Activated naive CD4-positive, alpha-beta T cell treated with anti-CD3 and anti-CD28 coated beads for 36 hours (primary cell): ENCODE measurements at regions of chr1 and their contacts with region 1.

Region 1: DNA sequence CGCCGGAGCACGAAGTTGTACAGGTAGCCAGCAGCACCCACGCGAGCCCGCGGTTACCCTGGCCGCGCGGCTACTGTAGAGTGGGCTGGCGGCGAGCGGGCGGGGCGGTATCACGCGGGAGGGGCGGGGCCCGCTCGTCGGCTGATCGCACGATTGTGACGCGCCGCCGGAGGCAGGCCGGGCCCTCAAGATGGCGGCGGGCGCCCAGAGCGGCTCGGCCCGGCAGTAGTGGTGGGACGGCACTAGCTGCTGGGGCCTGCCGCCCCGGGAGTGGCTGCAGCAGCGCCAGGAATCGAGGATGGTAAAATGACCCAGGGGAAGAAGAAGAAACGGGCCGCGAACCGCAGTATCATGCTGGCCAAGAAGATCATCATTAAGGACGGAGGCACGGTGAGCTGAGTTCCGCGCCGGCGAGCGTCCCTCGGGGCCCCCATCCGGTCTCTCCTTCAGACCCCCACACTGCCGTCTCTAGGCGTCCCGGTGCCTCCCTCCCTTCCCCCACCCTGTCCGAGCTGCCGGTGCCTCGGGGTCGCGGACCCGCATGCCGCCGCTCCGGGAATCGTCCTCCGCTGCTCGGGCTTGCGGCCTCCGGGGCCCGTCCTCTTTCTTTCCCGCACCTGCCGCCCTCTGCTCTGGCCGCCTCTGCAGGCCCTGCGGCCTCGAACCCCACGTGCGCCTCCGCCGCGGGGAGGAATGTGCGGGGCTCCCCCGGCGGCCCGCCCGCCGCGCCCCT is 68.3 kb downstream of the SLC35A3 start:
- DNase-seq: peak; percentile 89
- H3K4me3 Mint-ChIP-seq: peak overlapping the region; percentile 95
- H3K27ac Mint-ChIP-seq: peak overlapping the region; percentile 99
- H3K4me1 Mint-ChIP-seq: peaks cover 54% of the 10 kb centered on the region
- H3K27me3 Mint-ChIP-seq: no peaks in the 10 kb centered on the region

Region 2: GRCh38 chr1:98870959-98871903 is 1166.9 kb before region 1 on chr1:
- CTCF ChIA-PET with region 1: no interaction called
- intact Hi-C with region 1: loop called (anchors 2 kb)
- DNase-seq: peak; percentile 60
- H3K4me3 Mint-ChIP-seq: peak overlapping the region; percentile 68
- H3K27ac Mint-ChIP-seq: peak overlapping the region; percentile 97
- H3K4me1 Mint-ChIP-seq: peaks cover 23% of the 10 kb centered on the region
- H3K27me3 Mint-ChIP-seq: no peaks in the 10 kb centered on the region

Region 3: GRCh38 chr1:99849744-99850458 is 188.2 kb before region 1 on chr1 and contains the start of gene AGL:
- CTCF ChIA-PET with region 1: no interaction called
- intact Hi-C with region 1: loop called (anchors 1 kb)
- DNase-seq: peak; percentile 89
- H3K4me3 Mint-ChIP-seq: peak within 1 kb of the TSS; percentile 98
- H3K27ac Mint-ChIP-seq: peak within 1 kb of the TSS; percentile 91
- H3K4me1 Mint-ChIP-seq: peaks cover 23% of the 10 kb centered on the region
- H3K27me3 Mint-ChIP-seq: no peaks in the 10 kb centered on the region
- total RNA-seq, gene AGL: 15.6 to 16.8 TPM

Region 4: GRCh38 chr1:100132566-100133477 is 94.7 kb after region 1 on chr1 and contains the starts of genes SASS6 and TRMT13:
- CTCF ChIA-PET with region 1: no interaction called
- intact Hi-C with region 1: loop called (anchors 1 kb)
- DNase-seq: peak; percentile 97
- H3K4me3 Mint-ChIP-seq: peak within 1 kb of the TSS; percentile 91
- H3K27ac Mint-ChIP-seq: peak within 1 kb of the TSS; percentile 87
- H3K4me1 Mint-ChIP-seq: peaks cover 37% of the 10 kb centered on the region
- H3K27me3 Mint-ChIP-seq: no peaks in the 10 kb centered on the region
- total RNA-seq, gene SASS6: 8.2 TPM
- total RNA-seq, gene TRMT13: 12.9 to 16.6 TPM

Region 5: GRCh38 chr1:100377590-100378361 is 339.7 kb after region 1 on chr1:
- CTCF ChIA-PET with region 1: no interaction called
- intact Hi-C with region 1: loop called (anchors 2 kb)
- DNase-seq: no peak
- H3K4me3 Mint-ChIP-seq: no peak overlapping the region
- H3K27ac Mint-ChIP-seq: peak overlapping the region; percentile 71
- H3K4me1 Mint-ChIP-seq: peaks cover 60% of the 10 kb centered on the region
- H3K27me3 Mint-ChIP-seq: no peaks in the 10 kb centered on the region

Region 6: DNA sequence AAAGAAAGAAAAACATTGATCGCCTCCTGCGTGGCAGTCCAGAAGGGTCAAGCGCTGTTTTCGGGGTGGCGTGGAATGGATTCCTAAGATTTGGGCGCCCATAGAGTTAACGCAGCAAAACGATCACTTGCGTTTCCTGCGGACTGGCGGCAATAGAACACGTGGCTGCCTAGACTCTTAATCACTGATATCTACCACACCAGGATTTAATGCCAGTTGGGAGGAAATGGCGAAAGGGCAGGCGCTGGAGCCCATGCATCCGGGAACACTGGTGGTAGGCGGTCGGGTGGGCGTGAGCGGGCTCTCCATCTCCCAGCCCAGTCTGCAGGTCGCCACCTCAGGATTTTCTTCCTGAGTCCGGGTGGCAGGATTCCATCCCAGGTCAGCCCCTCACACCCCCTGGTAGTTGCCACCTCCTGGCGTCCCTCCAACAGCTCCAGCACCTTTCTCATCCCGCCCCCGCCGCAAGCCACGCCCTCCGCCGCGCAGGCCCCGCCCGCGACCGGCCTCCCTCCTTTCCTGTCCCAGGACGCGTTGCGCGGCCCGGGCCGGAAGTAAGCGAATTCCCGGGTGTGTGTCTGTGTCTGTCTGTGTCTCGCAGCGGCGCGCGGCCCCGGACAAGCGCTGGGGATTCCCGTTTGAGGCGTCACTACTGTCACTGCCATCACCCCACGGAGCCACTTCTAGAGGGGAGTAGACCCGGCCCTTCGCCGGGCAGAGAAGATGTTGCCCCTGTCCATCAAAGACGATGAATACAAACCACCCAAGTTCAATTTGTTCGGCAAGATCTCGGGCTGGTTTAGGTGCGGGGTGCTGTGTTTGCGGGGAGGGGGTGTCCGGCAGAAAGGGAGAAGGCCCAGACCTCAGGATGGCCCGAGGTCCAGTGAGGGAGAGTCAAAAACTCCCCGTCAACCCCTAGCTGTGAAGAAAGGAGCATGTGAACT is 857.7 kb after region 1 on chr1 and contains the start of gene SLC30A7:
- CTCF ChIA-PET with region 1: no interaction called
- intact Hi-C with region 1: loop called (anchors 1 kb)
- DNase-seq: peak; percentile 98
- H3K4me3 Mint-ChIP-seq: peak within 1 kb of the TSS; percentile 100
- H3K27ac Mint-ChIP-seq: peak within 1 kb of the TSS; percentile 100
- H3K4me1 Mint-ChIP-seq: peaks cover 37% of the 10 kb centered on the region
- H3K27me3 Mint-ChIP-seq: no peaks in the 10 kb centered on the region
- total RNA-seq, gene SLC30A7: 32.4 to 32.6 TPM